ENCODE measurements at regions of chr17 and their contacts with region 1.

Region 1: GRCh38 chr17:47315451-47316266 is 8.1 kb upstream of the EFCAB13 start:
- DNase-seq: peak; percentile 70

Region 2: GRCh38 chr17:47229535-47230443 is 85.9 kb before region 1 on chr17:
- CTCF ChIA-PET with region 1: interaction called, 18 read pairs
- POLR2A ChIA-PET with region 1: no interaction called
- DNase-seq: peak; percentile 89

Region 3: DNA sequence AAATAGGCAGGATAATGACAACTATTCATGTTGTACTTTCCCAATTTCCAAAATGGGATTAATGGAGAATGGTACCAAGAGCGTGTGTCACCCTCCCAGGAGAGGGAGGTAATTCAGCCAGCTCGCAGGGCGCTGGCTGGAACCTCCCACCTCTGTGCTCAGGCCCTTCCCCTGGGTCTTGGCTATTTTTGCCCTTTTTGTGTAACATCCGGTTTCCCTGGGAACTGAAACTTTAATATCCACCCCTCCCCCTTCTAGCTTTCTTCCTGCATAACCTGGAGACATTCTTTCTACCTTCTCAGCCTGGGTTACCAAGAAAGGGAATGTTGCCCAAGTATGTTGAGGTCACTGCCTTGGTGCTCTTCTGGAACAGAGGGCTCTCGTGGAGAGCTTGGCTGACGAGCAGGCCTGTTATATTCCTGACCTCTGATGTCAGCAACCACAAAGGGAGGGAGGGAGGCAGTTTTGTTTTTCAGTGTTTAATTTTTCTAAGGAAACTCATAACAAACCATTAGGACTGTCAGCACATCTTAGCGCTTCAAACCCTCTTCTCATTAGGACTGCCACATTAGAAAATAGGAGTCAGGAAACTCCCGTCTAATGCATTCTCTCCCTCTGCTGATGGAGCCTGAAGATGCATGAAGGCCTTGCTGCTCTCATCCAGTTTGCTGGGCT is 36.5 kb before region 1 on chr17:
- CTCF ChIA-PET with region 1: no interaction called
- POLR2A ChIA-PET with region 1: no interaction called
- DNase-seq: no peak

Region 4: GRCh38 chr17:47295062-47295845 is 20.4 kb before region 1 on chr17:
- CTCF ChIA-PET with region 1: no interaction called
- POLR2A ChIA-PET with region 1: no interaction called
- DNase-seq: no peak

Region 5: DNA sequence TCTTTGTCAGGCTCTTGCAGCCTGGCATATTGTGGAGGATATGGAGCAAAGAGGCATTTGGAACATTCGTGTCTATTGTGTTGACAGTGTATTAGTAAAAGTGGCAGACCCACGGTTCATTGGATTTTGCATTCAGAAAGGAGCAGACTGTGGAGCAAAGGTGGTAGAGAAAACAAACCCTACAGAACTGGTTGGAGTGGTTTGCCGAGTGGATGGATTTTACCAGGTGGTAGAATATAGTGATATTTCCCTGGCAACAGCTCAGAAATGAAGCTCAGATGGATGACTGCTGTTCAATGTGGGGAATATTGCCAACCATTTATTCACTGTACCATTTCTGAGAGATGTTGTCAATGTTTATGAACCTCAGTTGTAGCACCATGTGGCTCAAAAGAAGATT is 52.6 kb after region 1 on chr17:
- CTCF ChIA-PET with region 1: no interaction called
- POLR2A ChIA-PET with region 1: no interaction called
- DNase-seq: no peak

Region 6: GRCh38 chr17:47423406-47424295 is 108.0 kb after region 1 on chr17:
- CTCF ChIA-PET with region 1: no interaction called
- POLR2A ChIA-PET with region 1: no interaction called
- DNase-seq: no peak